ENCODE measurements at regions of chr14 and their contacts with region 1.

Region 1: GRCh38 chr14:51860164-51860824 is at the start of gene GNG2:
- DNase-seq: peak; percentile 62 to 87 (median 84)
- ATAC-seq: peak; percentile 98
- H3K4me3 ChIP-seq: peak within 1 kb of the TSS; percentile 65
- H3K4me3 Mint-ChIP-seq: peak within 1 kb of the TSS; percentile 89 to 99 (median 96)
- H3K27ac ChIP-seq: peak within 1 kb of the TSS; percentile 90
- H3K27ac Mint-ChIP-seq: peak within 1 kb of the TSS; percentile 88 to 99 (median 96)
- H3K4me1 ChIP-seq: peaks cover 28 to 45% of the 10 kb centered on the region in 2 donors
- H3K4me1 Mint-ChIP-seq: peaks cover 43 to 78% (median 65%) of the 10 kb centered on the region in 7 donors
- H3K27me3 ChIP-seq: no peaks in the 10 kb centered on the region
- H3K27me3 Mint-ChIP-seq: no peaks in the 10 kb centered on the region
- total RNA-seq, gene GNG2: 62.1 to 199 (median 106) TPM

Region 2: DNA sequence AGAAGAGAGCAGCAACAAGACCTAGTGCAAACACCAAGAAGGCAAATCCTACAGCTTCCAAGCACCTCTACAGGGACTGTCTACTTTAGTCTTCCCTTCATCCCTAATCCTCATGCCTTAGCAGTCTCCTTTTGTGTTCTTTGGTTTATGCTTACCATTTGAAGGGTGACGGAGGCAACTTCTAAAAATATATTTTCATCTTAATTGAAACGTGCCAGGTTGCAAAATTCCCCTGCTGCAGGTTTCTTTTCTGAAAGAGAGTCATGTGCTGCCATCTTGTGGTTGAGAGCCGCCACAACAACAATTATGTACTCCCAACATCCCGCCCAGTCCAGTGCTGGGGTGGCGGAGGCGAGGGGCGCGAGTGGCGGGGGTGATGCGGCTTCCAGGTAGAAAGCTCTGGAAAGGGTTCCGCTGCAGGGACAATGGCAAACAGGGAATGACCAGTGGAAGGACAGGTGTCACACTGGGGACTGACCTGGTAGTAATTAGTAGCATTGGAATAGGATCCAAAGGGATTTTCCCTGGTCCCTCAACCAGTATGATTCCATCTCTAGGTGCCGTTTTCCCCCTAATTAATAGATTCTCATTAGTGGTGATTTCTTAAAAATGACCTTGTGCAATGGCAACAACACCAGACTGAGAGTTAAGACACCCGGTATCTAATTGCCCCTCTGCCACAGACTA is 80.1 kb before region 1 on chr14:
- CTCF ChIA-PET with region 1: interaction called, 5 read pairs
- POLR2A ChIA-PET with region 1: interaction called, 3 read pairs
- intact Hi-C with region 1: loop called in 1 of 2 experiments (anchors 2 kb)
- DNase-seq: peak; percentile 34 to 74 (median 64)
- ATAC-seq: peak; percentile 84
- H3K4me3 ChIP-seq: no peak overlapping the region
- H3K4me3 Mint-ChIP-seq: peak overlapping the region; percentile 5 to 76 (median 53)
- H3K27ac ChIP-seq: no peak overlapping the region
- H3K27ac Mint-ChIP-seq: peak overlapping the region in 6 of 9 donors; percentile 35 to 89 (median 46)
- H3K4me1 ChIP-seq: peaks cover 5 to 15% of the 10 kb centered on the region in 2 donors
- H3K4me1 Mint-ChIP-seq: peaks cover 18 to 34% (median 26%) of the 10 kb centered on the region in 7 donors
- H3K27me3 ChIP-seq: no peaks in the 10 kb centered on the region
- H3K27me3 Mint-ChIP-seq: peaks cover 0 to 48% (median 5%) of the 10 kb centered on the region in 5 donors

Region 3: GRCh38 chr14:51873221-51873893 is 13.1 kb after region 1 on chr14:
- CTCF ChIA-PET with region 1: interaction called, 3 read pairs
- POLR2A ChIA-PET with region 1: interaction called, 10 read pairs
- intact Hi-C with region 1: loop called (anchors 1 kb)
- DNase-seq: peak in 2 of 9 donors; percentile 38 to 50
- ATAC-seq: peak; percentile 76
- H3K4me3 ChIP-seq: no peak overlapping the region
- H3K4me3 Mint-ChIP-seq: peak overlapping the region in 6 of 10 donors; percentile 1 to 70 (median 28)
- H3K27ac ChIP-seq: no peak overlapping the region
- H3K27ac Mint-ChIP-seq: peak overlapping the region; percentile 24 to 84 (median 69)
- H3K4me1 ChIP-seq: peaks cover 31 to 68% of the 10 kb centered on the region in 2 donors
- H3K4me1 Mint-ChIP-seq: peaks cover 34 to 64% (median 56%) of the 10 kb centered on the region in 7 donors
- H3K27me3 ChIP-seq: no peaks in the 10 kb centered on the region
- H3K27me3 Mint-ChIP-seq: no peaks in the 10 kb centered on the region

Region 4: DNA sequence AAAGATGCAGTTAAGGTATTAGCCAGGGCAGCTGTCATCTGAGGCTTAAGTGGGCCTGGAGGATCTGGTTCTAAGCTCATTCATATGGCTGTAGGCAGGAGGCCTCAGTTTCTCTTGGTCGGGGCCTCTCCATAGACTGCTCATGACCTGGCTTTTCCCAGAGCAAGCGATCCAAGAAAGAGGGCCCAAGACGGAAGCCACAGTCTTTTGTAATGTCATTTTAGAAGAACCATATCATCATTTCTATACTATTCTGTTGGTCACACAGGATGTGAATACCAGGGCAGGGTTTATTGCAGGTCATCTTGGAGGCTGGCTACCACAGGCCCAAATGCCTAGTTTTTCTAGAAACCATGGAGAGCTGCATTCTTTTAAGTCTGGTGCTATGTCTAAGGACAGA is 47.8 kb after region 1 on chr14:
- CTCF ChIA-PET with region 1: interaction called, 3 read pairs
- POLR2A ChIA-PET with region 1: no interaction called
- intact Hi-C with region 1: loop called (anchors 2 to 5 kb)
- DNase-seq: no peak
- ATAC-seq: no peak
- H3K4me3 ChIP-seq: no peak overlapping the region
- H3K4me3 Mint-ChIP-seq: no peak overlapping the region
- H3K27ac ChIP-seq: no peak overlapping the region
- H3K27ac Mint-ChIP-seq: peak overlapping the region in 1 of 9 donors; percentile 15
- H3K4me1 ChIP-seq: peaks cover 20 to 21% of the 10 kb centered on the region in 2 donors
- H3K4me1 Mint-ChIP-seq: peaks cover 42 to 84% (median 67%) of the 10 kb centered on the region in 7 donors
- H3K27me3 ChIP-seq: no peaks in the 10 kb centered on the region
- H3K27me3 Mint-ChIP-seq: no peaks in the 10 kb centered on the region

Region 5: GRCh38 chr14:51963286-51963685 is 103.0 kb after region 1 on chr14:
- CTCF ChIA-PET with region 1: interaction called, 3 read pairs
- POLR2A ChIA-PET with region 1: interaction called, 4 read pairs
- intact Hi-C with region 1: loop called in 1 of 2 experiments (anchors 5 kb)
- DNase-seq: peak in 6 of 9 donors; percentile 17 to 64 (median 42)
- ATAC-seq: peak; percentile 70
- H3K4me3 ChIP-seq: no peak overlapping the region
- H3K4me3 Mint-ChIP-seq: peak overlapping the region in 9 of 10 donors; percentile 31 to 81 (median 71)
- H3K27ac ChIP-seq: peak overlapping the region; percentile 50
- H3K27ac Mint-ChIP-seq: peak overlapping the region; percentile 58 to 96 (median 83)
- H3K4me1 ChIP-seq: peaks cover 8 to 11% of the 10 kb centered on the region in 2 donors
- H3K4me1 Mint-ChIP-seq: peaks cover 27 to 56% (median 45%) of the 10 kb centered on the region in 7 donors
- H3K27me3 ChIP-seq: no peaks in the 10 kb centered on the region
- H3K27me3 Mint-ChIP-seq: no peaks in the 10 kb centered on the region

Region 6: GRCh38 chr14:52313903-52314594 is 453.8 kb after region 1 on chr14 and contains the start of gene PTGER2:
- CTCF ChIA-PET with region 1: no interaction called
- POLR2A ChIA-PET with region 1: no interaction called
- intact Hi-C with region 1: loop called (anchors 10 kb)
- DNase-seq: peak; percentile 12 to 91 (median 34)
- ATAC-seq: peak; percentile 79
- H3K4me3 ChIP-seq: peak within 1 kb of the TSS; percentile 80
- H3K4me3 Mint-ChIP-seq: peak within 1 kb of the TSS; percentile 88 to 100 (median 98)
- H3K27ac ChIP-seq: peak within 1 kb of the TSS; percentile 62
- H3K27ac Mint-ChIP-seq: peak within 1 kb of the TSS; percentile 51 to 98 (median 92)
- H3K4me1 ChIP-seq: peaks cover 14 to 26% of the 10 kb centered on the region in 2 donors
- H3K4me1 Mint-ChIP-seq: peaks cover 48 to 81% (median 57%) of the 10 kb centered on the region in 7 donors
- H3K27me3 ChIP-seq: no peaks in the 10 kb centered on the region
- H3K27me3 Mint-ChIP-seq: peaks cover 0 to 5% (median 0%) of the 10 kb centered on the region in 5 donors
- total RNA-seq, gene PTGER2: 1.7 to 162 (median 15.2) TPM

Region 7: GRCh38 chr14:53683229-53683628 is 1822.9 kb after region 1 on chr14:
- CTCF ChIA-PET with region 1: no interaction called
- POLR2A ChIA-PET with region 1: no interaction called
- intact Hi-C with region 1: no loop called
- DNase-seq: no peak
- ATAC-seq: no peak
- H3K4me3 ChIP-seq: no peak overlapping the region
- H3K4me3 Mint-ChIP-seq: no peak overlapping the region
- H3K27ac ChIP-seq: no peak overlapping the region
- H3K27ac Mint-ChIP-seq: no peak overlapping the region
- H3K4me1 ChIP-seq: no peaks in the 10 kb centered on the region
- H3K4me1 Mint-ChIP-seq: no peaks in the 10 kb centered on the region
- H3K27me3 ChIP-seq: no peaks in the 10 kb centered on the region
- H3K27me3 Mint-ChIP-seq: peaks cover 0 to 5% (median 0%) of the 10 kb centered on the region in 5 donors